Mammary epithelial cell (primary cell): ENCODE measurements at regions of chr1 and their contacts with region 1.

Region 1: DNA sequence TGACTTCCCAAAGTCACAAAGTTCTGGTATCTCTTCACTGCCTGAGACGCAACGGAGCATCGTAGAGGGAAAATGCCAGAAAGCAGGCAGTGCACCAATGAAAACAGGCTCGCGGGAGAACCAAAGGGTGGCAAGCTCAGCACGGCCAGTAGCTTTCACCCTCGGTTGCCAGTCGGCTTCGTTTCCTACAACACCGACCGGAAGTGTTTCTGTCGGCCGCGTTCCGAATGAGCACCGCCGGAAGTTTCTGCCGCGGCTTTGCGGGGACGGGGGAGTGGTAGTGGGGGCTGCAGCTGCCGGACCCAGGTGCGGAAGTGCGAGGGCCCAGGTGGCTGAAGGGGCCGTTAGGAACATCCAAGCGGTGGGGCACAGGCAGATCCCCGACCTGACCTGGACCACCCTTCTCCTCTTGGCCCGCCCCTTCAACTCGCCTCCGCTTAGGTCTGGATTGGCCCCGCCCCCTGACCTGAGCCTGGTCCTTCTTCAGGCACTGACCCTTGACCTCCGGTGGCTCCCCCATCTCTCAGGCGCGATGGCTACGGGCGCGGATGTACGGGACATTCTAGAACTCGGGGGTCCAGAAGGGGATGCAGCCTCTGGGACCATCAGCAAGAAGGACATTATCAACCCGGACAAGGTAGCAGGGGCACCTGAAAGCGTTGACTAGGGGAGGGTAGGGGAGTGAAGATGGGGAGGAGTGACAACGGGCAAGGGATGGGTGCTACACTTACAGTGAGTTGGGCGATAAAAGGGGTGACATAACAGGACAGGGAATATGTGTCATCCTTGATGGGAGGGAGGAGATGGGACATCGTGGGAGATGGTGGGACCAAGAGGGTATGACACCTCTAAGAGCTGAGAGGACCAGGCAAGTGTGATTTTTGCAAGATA is at the start of gene DMAP1:
- DNase-seq: peak; percentile 71
- H3K4me3 ChIP-seq: peak within 1 kb of the TSS; percentile 69 to 94 (median 72)
- H3K27ac ChIP-seq: peak within 1 kb of the TSS; percentile 29
- H3K4me1 ChIP-seq: peaks cover 18% of the 10 kb centered on the region
- H3K27me3 ChIP-seq: no peaks in the 10 kb centered on the region
- CTCF ChIP-seq: peak in 1 of 2 donors; percentile 30
- total RNA-seq, gene DMAP1: 21.5 to 30.0 TPM

Region 2: DNA sequence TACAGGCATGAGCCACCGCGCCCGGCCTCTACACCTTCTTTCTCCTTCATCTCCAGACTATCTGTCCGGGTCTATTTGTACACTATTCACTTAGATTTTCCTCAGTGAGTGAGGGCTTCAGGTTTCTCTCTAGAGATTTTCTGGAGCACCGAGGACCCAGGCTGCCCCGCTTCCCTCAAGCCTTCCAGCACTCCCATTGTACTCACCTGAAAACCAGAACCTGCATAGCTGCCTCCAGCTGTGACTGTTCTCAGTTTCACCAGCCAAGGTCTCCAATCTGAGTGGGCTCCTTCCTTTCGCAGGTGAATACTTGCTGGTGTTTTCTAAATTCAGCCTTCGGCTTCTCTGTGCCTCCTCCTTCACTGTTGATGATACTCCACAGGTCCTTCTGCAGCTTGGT is 13.1 kb before region 1 on chr1:
- CTCF ChIA-PET with region 1: no interaction called
- dilution Hi-C with region 1: no loop called
- in situ Hi-C with region 1: no loop called
- intact Hi-C with region 1: no loop called
- DNase-seq: no peak
- H3K4me3 ChIP-seq: no peak overlapping the region
- H3K27ac ChIP-seq: no peak overlapping the region
- H3K4me1 ChIP-seq: no peaks in the 10 kb centered on the region
- H3K27me3 ChIP-seq: no peaks in the 10 kb centered on the region
- CTCF ChIP-seq: no peak

Region 3: DNA sequence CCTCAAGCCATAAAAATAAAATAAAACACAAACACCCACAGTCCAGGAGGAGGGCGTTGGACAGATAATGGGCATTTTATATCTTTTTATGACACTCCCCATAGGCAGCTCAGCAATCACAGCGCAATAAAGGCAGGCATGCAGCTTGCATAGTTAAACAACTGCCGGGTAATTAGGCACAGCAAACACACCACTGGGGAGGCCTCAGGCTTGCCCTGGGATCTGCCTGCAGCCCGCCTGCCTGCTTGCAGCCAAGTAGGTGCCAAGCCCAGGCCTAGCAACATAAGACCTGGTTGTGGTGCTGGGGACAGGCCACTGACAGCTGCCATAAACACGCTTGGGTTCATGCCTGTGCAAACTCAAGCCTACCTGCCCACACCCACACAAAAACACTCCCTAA is 54.0 kb after region 1 on chr1:
- CTCF ChIA-PET with region 1: no interaction called
- dilution Hi-C with region 1: loop called (anchors 5 kb)
- in situ Hi-C with region 1: no loop called
- intact Hi-C with region 1: no loop called
- DNase-seq: no peak
- H3K4me3 ChIP-seq: no peak overlapping the region
- H3K27ac ChIP-seq: no peak overlapping the region
- H3K4me1 ChIP-seq: no peaks in the 10 kb centered on the region
- H3K27me3 ChIP-seq: no peaks in the 10 kb centered on the region
- CTCF ChIP-seq: no peak

Region 4: DNA sequence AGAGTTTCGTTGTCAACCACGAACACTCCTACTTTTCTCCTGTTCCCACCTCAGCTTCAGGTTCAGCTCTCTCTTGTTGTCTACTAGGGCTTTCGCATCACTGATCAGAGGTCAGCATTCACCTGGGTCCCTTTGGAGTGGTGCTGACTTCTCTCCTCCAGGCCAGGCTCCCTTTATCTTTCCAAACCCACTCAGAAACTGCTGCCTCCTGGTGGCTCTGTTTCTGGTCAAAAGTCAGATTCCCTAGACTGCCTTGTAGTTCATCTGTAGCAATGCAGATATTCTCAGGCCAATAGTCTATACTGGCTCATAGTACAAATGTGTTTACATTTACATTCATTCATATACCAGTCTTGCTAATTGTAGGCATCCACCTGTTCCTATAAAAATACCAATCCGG is 148.0 kb after region 1 on chr1:
- CTCF ChIA-PET with region 1: interaction called, 6 read pairs
- dilution Hi-C with region 1: no loop called
- in situ Hi-C with region 1: no loop called
- intact Hi-C with region 1: loop called (anchors 1 kb)
- DNase-seq: no peak
- H3K4me3 ChIP-seq: no peak overlapping the region
- H3K27ac ChIP-seq: no peak overlapping the region
- H3K4me1 ChIP-seq: no peaks in the 10 kb centered on the region
- H3K27me3 ChIP-seq: peaks cover 3% of the 10 kb centered on the region
- CTCF ChIP-seq: no peak

Region 5: DNA sequence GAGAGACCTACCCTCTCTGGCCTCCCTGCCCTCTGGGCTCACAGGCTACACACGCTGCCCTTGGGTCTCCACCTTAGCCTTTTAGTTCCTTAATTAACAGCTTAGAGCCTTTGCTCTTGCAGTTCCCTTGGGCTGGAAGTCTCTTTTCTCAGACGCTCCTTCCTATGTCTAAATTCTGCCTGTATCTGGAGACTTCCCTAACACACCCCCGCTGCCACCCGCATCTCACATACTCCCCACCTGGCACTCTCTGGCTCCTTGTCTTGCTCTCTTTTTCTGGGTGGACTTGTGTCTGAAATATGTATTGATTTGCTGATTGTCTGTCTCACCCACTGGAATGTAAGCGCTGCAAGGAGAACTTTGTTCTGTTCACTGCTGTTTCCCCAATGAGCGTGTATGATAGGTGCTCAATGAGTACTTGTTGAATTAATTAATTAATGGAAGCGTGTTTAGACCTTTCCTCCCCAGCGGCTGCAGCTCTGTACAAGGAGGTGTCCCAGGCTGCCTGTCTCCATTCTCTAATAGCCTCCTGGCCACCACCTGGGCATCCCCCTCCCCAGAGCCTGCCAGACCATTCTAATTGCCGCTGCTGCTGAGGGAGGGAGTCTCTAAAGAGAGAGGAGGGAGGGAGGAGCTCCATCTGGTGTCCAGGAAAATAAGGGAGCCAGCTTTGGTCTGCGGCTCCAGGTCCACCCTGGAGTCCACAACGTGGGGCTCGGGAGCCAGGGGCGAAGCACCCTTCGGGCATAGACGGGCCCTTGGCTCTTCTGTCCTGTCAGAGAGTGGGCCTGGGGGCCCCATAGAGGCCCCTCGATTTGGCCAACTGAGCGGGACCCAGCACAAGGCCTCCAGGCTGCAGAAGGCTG is 286.9 kb after region 1 on chr1:
- CTCF ChIA-PET with region 1: no interaction called
- dilution Hi-C with region 1: no loop called
- in situ Hi-C with region 1: no loop called
- intact Hi-C with region 1: loop called (anchors 10 kb)
- DNase-seq: no peak
- H3K4me3 ChIP-seq: no peak overlapping the region
- H3K27ac ChIP-seq: no peak overlapping the region
- H3K4me1 ChIP-seq: no peaks in the 10 kb centered on the region
- H3K27me3 ChIP-seq: no peaks in the 10 kb centered on the region
- CTCF ChIP-seq: peak in 1 of 2 donors; percentile 48

Region 6: GRCh38 chr1:44652445-44653106 is 439.1 kb after region 1 on chr1:
- CTCF ChIA-PET with region 1: no interaction called
- dilution Hi-C with region 1: no loop called
- in situ Hi-C with region 1: no loop called
- intact Hi-C with region 1: loop called (anchors 1 kb)
- DNase-seq: peak; percentile 47
- H3K4me3 ChIP-seq: no peak overlapping the region
- H3K27ac ChIP-seq: no peak overlapping the region
- H3K4me1 ChIP-seq: no peaks in the 10 kb centered on the region
- H3K27me3 ChIP-seq: no peaks in the 10 kb centered on the region
- CTCF ChIP-seq: peak; percentile 98